CD4-positive, alpha-beta memory T cell (primary cell): ENCODE measurements at regions of chr22 and their contacts with region 1.

Region 1: GRCh38 chr22:36856121-36856791 is 4.5 kb upstream of the NCF4 start:
- DNase-seq: peak; percentile 85 to 90 (median 86)
- H3K4me3 ChIP-seq: no peak overlapping the region
- H3K4me3 Mint-ChIP-seq: peak overlapping the region in 6 of 8 donors; percentile 58 to 80 (median 68)
- H3K27ac ChIP-seq: no peak overlapping the region
- H3K27ac Mint-ChIP-seq: peak overlapping the region in 6 of 7 donors; percentile 44 to 92 (median 73)
- H3K4me1 ChIP-seq: peaks cover 31% of the 10 kb centered on the region
- H3K4me1 Mint-ChIP-seq: peaks cover 16 to 39% (median 28%) of the 10 kb centered on the region in 4 donors
- H3K27me3 ChIP-seq: no peaks in the 10 kb centered on the region
- H3K27me3 Mint-ChIP-seq: peaks cover 2 to 4% of the 10 kb centered on the region in 2 donors

Region 2: DNA sequence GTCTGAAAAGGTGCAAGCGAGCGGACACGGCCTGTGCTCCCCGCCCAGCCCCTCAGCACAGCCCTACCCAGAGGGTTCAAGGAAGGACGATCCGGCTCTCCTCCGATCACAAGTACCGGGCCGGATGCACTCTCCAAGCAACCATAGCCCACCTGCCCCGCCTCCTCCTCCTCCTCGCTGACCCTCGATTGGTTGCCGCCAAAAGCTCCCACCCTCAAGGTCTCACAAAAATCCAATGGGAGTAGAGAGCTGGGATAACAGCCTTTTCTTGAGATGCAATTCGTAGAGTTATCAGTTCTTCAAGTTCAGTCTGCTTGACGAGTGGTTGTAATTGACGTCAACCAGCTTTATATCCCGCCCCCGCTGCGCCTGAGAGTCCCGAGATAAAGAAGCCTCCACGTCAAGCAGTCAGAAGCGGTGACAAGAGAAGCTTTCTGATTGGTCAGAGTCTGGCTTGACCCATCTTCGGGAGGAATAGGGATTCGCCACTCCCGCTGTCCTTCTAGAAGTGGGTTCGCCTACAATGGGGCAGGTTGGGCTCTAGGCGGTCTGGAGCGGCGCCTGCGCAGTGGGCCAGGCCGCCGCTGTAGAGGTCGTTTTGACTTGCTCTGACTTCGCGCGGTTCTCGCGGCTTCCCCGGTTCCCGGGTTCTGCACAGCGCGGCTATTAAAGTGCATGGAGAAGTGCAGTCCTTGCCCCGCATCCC is 80.1 kb before region 1 on chr22 and contains the start of gene IFT27:
- CTCF ChIA-PET with region 1: interaction called, 32 read pairs
- POLR2A ChIA-PET with region 1: interaction called, 13 read pairs
- intact Hi-C with region 1: no loop called
- DNase-seq: peak; percentile 96 to 100 (median 99)
- H3K4me3 ChIP-seq: peak within 1 kb of the TSS; percentile 51 to 64
- H3K4me3 Mint-ChIP-seq: peak within 1 kb of the TSS; percentile 89 to 97 (median 92)
- H3K27ac ChIP-seq: peak within 1 kb of the TSS; percentile 73
- H3K27ac Mint-ChIP-seq: peak within 1 kb of the TSS; percentile 93 to 99 (median 98)
- H3K4me1 ChIP-seq: peaks cover 17% of the 10 kb centered on the region
- H3K4me1 Mint-ChIP-seq: peaks cover 16 to 32% (median 24%) of the 10 kb centered on the region in 4 donors
- H3K27me3 ChIP-seq: no peaks in the 10 kb centered on the region
- H3K27me3 Mint-ChIP-seq: no peaks in the 10 kb centered on the region
- total RNA-seq, gene IFT27: 38.2 to 42.6 TPM

Region 3: DNA sequence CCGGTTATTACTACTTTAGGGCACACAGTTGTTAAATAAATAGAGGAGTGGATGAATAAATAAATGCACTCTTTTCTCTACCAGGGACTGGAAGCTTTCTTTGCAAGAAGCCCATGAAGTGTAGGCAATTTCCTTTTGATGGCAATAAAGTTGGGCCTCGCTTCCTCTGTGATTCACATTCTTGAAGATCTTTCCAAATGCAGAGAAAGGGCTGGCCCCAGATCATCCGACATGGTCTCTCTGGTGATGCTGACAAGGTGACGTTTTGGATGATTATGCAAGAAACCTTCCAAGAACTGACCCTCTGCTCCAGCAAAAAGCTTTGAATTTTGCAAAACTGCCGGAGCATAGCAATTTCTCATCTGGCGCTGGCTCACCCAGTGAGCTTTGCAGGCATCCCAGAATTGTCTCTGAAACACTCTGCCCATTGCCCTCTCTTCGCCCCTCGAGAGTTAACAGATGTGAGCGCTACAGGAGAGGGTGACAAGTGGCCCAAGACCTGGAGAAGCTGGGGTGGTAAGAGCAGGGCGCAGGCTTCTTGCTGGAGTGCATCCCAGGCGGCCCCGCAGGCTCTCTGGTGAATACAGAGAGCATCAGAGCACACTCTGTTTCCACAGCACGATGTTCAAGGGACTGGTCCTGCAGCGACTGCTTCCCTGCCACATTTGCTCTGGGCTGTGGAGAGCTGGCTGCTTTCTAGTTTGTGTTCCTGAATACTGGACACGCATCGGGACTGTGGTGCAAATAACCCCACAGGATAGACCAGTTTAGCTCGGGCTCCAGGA is 68.9 kb before region 1 on chr22:
- CTCF ChIA-PET with region 1: interaction called, 32 read pairs
- POLR2A ChIA-PET with region 1: interaction called, 3 read pairs
- intact Hi-C with region 1: loop called (anchors 1 kb)
- DNase-seq: no peak
- H3K4me3 ChIP-seq: no peak overlapping the region
- H3K4me3 Mint-ChIP-seq: no peak overlapping the region
- H3K27ac ChIP-seq: no peak overlapping the region
- H3K27ac Mint-ChIP-seq: no peak overlapping the region
- H3K4me1 ChIP-seq: peaks cover 2% of the 10 kb centered on the region
- H3K4me1 Mint-ChIP-seq: peaks cover 3 to 12% (median 4%) of the 10 kb centered on the region in 4 donors
- H3K27me3 ChIP-seq: peaks cover 5% of the 10 kb centered on the region
- H3K27me3 Mint-ChIP-seq: peaks cover 3 to 8% of the 10 kb centered on the region in 2 donors

Region 4: DNA sequence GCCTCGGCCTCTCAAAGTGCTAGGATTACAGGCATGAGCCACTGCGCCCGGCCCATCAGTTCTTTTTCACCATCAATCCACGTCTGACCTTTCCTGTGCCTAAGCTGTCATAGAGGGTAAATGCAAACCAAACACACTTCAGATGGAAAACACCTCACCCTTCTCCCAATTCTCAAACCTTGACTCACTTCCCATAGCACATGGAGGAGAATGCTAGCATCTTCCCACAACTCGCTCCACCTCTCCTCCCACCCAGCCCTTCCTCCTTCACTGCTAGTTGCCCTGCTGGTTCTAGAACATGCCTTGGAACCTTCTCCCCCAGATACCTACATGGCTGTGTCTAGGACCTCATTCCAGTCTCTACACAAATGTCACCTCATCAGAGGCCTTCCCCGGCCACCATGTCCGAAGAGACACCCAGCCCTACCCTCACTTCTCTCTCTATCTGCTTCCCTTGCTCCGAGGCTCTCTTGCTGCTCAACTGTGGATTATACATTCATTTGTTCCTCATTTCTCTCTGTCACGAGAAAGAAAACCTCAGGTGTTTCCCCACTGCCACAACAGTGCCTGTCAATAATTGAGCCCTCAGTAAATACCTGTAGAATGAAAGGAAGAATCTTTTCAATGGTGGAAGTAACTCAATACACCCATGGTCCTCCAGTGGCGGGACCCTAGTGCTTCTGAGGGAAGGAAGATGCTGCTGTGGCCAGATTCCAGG is 16.7 kb before region 1 on chr22:
- CTCF ChIA-PET with region 1: interaction called, 11 read pairs
- POLR2A ChIA-PET with region 1: no interaction called
- intact Hi-C with region 1: no loop called
- DNase-seq: peak in 1 of 5 donors; percentile 13
- H3K4me3 ChIP-seq: no peak overlapping the region
- H3K4me3 Mint-ChIP-seq: no peak overlapping the region
- H3K27ac ChIP-seq: no peak overlapping the region
- H3K27ac Mint-ChIP-seq: no peak overlapping the region
- H3K4me1 ChIP-seq: no peaks in the 10 kb centered on the region
- H3K4me1 Mint-ChIP-seq: peaks cover 0 to 1% (median 0%) of the 10 kb centered on the region in 4 donors
- H3K27me3 ChIP-seq: no peaks in the 10 kb centered on the region
- H3K27me3 Mint-ChIP-seq: peaks cover 25 to 34% of the 10 kb centered on the region in 2 donors

Region 5: DNA sequence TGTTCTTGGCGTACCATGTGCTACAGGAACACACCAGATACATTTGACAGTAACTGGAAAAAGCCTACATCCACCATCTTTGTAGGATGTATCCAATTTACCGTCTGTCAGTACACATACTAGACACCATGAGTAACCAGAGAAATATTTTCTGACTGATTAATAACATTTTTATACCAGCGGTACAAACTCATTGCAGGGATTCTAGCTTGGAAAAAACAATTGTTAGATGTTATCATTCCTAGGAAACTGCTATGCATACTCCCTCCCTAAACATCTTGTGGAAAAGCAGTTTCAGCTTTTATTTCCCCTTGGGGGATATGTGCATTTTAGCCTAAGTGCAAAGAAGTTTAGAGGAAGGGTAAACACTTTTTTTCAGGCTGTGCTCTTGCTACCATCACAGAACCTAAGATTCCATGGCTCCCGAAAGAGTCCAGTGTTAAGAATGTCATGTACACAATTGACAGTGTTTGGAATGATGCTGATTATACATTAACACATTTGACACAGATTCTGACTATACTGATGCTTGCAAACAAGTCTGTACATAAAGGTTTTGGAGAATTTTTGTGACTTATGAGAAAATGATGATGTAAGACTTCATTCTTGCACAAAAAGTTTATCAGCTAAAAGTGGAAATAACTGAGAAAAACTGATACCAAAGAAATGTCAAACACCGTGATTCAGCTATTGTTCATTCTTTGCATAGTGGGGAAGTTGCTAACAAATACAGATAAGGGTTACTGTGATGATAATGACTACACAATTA is 28.3 kb after region 1 on chr22:
- CTCF ChIA-PET with region 1: interaction called, 48 read pairs
- POLR2A ChIA-PET with region 1: interaction called, 18 read pairs
- intact Hi-C with region 1: no loop called
- DNase-seq: no peak
- H3K4me3 ChIP-seq: no peak overlapping the region
- H3K4me3 Mint-ChIP-seq: no peak overlapping the region
- H3K27ac ChIP-seq: no peak overlapping the region
- H3K27ac Mint-ChIP-seq: no peak overlapping the region
- H3K4me1 ChIP-seq: peaks cover 21% of the 10 kb centered on the region
- H3K4me1 Mint-ChIP-seq: peaks cover 7 to 8% (median 7%) of the 10 kb centered on the region in 4 donors
- H3K27me3 ChIP-seq: no peaks in the 10 kb centered on the region
- H3K27me3 Mint-ChIP-seq: peaks cover 0 to 2% of the 10 kb centered on the region in 2 donors

Region 6: DNA sequence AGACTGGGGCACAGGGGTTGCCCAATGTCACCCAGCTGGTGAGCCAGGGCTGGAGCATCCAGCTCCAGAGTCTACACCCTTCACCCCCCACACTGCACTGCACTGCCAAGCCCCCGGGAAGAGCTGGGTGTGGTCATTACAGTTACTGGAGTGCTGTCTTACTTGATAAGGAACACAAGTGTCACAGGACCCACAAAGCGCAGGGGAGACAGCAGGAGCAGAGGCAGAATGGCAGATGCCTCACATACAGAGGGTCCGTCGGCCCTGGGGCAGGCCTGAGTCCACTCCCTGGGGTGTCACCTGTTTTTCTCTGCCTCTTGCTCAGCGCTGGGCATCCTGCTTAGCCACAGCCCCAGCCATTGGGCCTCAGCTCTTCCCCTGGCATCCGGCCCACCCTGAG is 285.7 kb after region 1 on chr22:
- CTCF ChIA-PET with region 1: no interaction called
- POLR2A ChIA-PET with region 1: no interaction called
- intact Hi-C with region 1: no loop called
- DNase-seq: peak in 1 of 5 donors; percentile 28
- H3K4me3 ChIP-seq: no peak overlapping the region
- H3K4me3 Mint-ChIP-seq: no peak overlapping the region
- H3K27ac ChIP-seq: peak overlapping the region; percentile 32
- H3K27ac Mint-ChIP-seq: peak overlapping the region in 2 of 7 donors; percentile 30 to 53
- H3K4me1 ChIP-seq: peaks cover 50% of the 10 kb centered on the region
- H3K4me1 Mint-ChIP-seq: peaks cover 23 to 55% (median 35%) of the 10 kb centered on the region in 4 donors
- H3K27me3 ChIP-seq: no peaks in the 10 kb centered on the region
- H3K27me3 Mint-ChIP-seq: no peaks in the 10 kb centered on the region